Common myeloid progenitor, CD34-positive (primary cell): ENCODE measurements at regions of chr13 and their contacts with region 1.

Region 1: GRCh38 chr13:77002590-77003190 is 10.8 kb downstream of the CLN5 start:
- DNase-seq: peak in 2 of 3 donors; percentile 45 to 48
- H3K4me3 ChIP-seq: no peak overlapping the region
- H3K27ac ChIP-seq: no peak overlapping the region
- H3K4me1 ChIP-seq: peaks cover 3 to 26% (median 7%) of the 10 kb centered on the region in 4 experiments
- H3K27me3 ChIP-seq: no peaks in the 10 kb centered on the region

Region 2: DNA sequence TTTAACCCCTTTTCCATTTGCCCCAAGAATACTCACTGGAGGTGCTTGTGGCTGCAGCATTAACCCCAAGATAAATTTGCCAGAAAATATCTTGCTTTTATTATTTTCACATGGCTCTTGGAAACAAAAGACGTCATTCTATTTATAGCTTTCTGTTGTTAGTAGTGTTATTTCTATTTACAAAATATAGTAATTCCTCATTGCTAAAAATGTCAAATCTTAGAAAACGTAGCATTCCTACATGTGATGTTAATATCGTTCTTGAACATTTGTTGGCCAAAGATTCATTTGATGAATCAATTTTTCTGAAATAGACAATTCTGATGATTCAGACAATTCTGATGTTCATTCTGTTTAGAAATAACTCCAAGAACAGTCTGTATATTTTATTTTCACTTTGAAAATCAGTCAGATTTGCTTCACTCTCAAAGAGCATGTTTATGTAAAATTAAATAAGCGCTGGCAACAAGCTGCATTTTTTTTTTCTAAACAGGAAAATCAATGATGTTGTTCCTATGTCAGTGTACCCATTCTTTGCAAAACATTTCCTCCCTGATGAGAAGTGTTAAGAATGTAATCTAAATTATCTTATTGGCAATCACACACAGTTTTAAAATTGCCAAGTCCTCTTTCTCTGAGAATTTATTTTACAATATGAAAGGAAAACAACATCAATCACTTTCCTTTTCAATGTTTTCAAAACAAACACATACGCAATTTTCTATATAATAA is 450.5 kb before region 1 on chr13:
- CTCF ChIA-PET with region 1: no interaction called
- POLR2A ChIA-PET with region 1: no interaction called
- DNase-seq: no peak
- H3K4me3 ChIP-seq: no peak overlapping the region
- H3K27ac ChIP-seq: no peak overlapping the region
- H3K4me1 ChIP-seq: peaks cover 0 to 5% (median 1%) of the 10 kb centered on the region in 4 experiments
- H3K27me3 ChIP-seq: no peaks in the 10 kb centered on the region

Region 3: DNA sequence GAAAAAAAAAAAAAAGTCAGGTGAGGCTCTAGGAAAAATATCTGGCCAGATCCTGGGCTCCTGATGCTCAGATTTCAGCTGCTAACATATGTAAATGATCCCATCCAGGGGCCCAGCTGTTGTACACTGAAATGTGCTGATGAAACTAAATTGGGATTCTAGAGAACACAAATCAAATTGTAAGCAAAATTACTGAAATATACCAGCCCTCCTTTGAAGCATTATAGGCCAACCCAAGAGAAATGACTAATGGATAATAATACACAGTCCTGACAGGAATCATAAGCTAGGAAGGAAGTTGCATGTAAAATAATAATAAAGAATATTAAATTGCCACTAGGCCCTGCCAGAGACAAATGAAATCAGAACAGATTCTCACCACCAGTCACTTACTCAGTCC is 134.3 kb before region 1 on chr13:
- CTCF ChIA-PET with region 1: no interaction called
- POLR2A ChIA-PET with region 1: no interaction called
- DNase-seq: no peak
- H3K4me3 ChIP-seq: no peak overlapping the region
- H3K27ac ChIP-seq: no peak overlapping the region
- H3K4me1 ChIP-seq: no peaks in the 10 kb centered on the region
- H3K27me3 ChIP-seq: no peaks in the 10 kb centered on the region

Region 4: DNA sequence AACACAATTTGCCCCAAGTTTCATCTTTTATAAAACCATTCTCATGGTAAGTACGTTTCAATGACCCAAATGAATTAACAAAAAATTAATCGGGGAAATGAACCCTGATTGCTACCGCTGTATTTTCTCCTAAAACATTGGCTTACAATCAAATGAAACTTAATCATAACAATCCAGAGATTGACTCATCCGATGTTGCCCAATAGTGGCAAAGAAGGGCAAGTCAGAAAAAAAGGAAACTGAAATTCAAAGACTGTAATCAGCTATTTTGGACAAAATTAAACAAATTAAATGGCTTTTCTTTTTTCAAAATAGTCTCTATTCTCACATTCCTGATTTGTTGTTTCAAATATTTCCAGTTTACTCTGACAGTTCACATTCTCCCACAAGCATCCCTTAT is 58.2 kb before region 1 on chr13:
- CTCF ChIA-PET with region 1: no interaction called
- POLR2A ChIA-PET with region 1: no interaction called
- DNase-seq: peak in 2 of 3 donors; percentile 18 to 33
- H3K4me3 ChIP-seq: no peak overlapping the region
- H3K27ac ChIP-seq: no peak overlapping the region
- H3K4me1 ChIP-seq: no peaks in the 10 kb centered on the region
- H3K27me3 ChIP-seq: no peaks in the 10 kb centered on the region

Region 5: GRCh38 chr13:76991796-76992547 is 10.7 kb before region 1 on chr13 and contains the start of gene CLN5:
- CTCF ChIA-PET with region 1: interaction called, 20 read pairs
- POLR2A ChIA-PET with region 1: interaction called, 3 read pairs
- DNase-seq: peak; percentile 96 to 98 (median 98)
- H3K4me3 ChIP-seq: peak within 1 kb of the TSS; percentile 62 to 99 (median 91)
- H3K27ac ChIP-seq: peak within 1 kb of the TSS; percentile 47 to 82
- H3K4me1 ChIP-seq: peaks cover 0 to 25% (median 13%) of the 10 kb centered on the region in 4 experiments
- H3K27me3 ChIP-seq: no peaks in the 10 kb centered on the region

Region 6: GRCh38 chr13:77079902-77080413 is 77.3 kb after region 1 on chr13:
- CTCF ChIA-PET with region 1: no interaction called
- POLR2A ChIA-PET with region 1: no interaction called
- DNase-seq: no peak
- H3K4me3 ChIP-seq: no peak overlapping the region
- H3K27ac ChIP-seq: no peak overlapping the region
- H3K4me1 ChIP-seq: no peaks in the 10 kb centered on the region
- H3K27me3 ChIP-seq: no peaks in the 10 kb centered on the region